ENCODE measurements at regions of chr3 and their contacts with region 1.

Region 1: GRCh38 chr3:120348981-120349818 is at the start of gene LRRC58:
- DNase-seq: peak; percentile 95
- H3K4me3 ChIP-seq: peak within 1 kb of the TSS; percentile 69 to 94 (median 85)
- H3K27ac ChIP-seq: peak within 1 kb of the TSS; percentile 86 to 95 (median 90)
- H3K4me1 ChIP-seq: peaks cover 16 to 47% (median 34%) of the 10 kb centered on the region in 4 donors
- H3K27me3 ChIP-seq: no peaks in the 10 kb centered on the region
- CTCF ChIP-seq: peak; percentile 24 to 41 (median 36)
- EP300 ChIP-seq: no peak
- POLR2A ChIP-seq: peak; percentile 84
- total RNA-seq, gene LRRC58: 30.0 to 36.7 (median 35.2) TPM

Region 2: GRCh38 chr3:119891944-119892721 is 457.1 kb before region 1 on chr3:
- intact Hi-C with region 1: loop called (anchors 5 kb)
- DNase-seq: no peak
- H3K4me3 ChIP-seq: no peak overlapping the region
- H3K27ac ChIP-seq: no peak overlapping the region
- H3K4me1 ChIP-seq: peaks cover 0 to 10% (median 8%) of the 10 kb centered on the region in 4 donors
- H3K27me3 ChIP-seq: no peaks in the 10 kb centered on the region
- CTCF ChIP-seq: peak; percentile 64 to 73 (median 71)
- EP300 ChIP-seq: no peak
- POLR2A ChIP-seq: no peak

Region 3: GRCh38 chr3:120095226-120095978 is 253.8 kb before region 1 on chr3:
- intact Hi-C with region 1: loop called (anchors 10 kb)
- DNase-seq: peak; percentile 97
- H3K4me3 ChIP-seq: peak overlapping the region; percentile 86 to 90 (median 88)
- H3K27ac ChIP-seq: peak overlapping the region; percentile 99 to 100 (median 99)
- H3K4me1 ChIP-seq: peaks cover 9 to 31% (median 26%) of the 10 kb centered on the region in 4 donors
- H3K27me3 ChIP-seq: no peaks in the 10 kb centered on the region
- CTCF ChIP-seq: no peak
- EP300 ChIP-seq: no peak
- POLR2A ChIP-seq: peak; percentile 89

Region 4: DNA sequence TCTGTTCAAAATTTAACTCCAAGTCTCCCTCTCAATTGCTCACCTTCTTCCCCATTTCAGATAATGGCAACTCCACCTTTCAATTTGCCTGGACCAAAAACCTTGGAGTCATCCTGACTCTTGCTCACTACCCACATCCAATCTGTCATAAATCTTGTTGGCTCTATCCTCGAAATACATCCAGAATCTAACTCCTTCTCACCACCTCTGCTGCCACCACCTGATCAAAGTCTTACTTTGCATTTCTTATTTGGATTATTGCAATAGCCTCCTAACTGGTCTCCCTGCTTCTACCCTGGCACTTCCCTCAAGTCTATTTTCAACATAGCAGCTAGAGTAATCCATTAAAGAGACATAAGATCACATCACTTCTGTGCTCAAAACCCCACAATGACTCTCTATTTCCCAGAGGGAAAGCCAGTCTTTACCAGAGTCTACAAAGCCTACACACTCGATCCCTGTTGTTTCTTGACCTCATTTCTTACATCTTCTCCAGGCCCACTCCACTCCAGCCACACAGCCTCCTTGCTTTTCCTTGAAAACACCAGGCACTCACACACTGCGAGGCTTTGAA is 150.8 kb before region 1 on chr3:
- intact Hi-C with region 1: no loop called
- DNase-seq: no peak
- H3K4me3 ChIP-seq: no peak overlapping the region
- H3K27ac ChIP-seq: no peak overlapping the region
- H3K4me1 ChIP-seq: peaks cover 10 to 13% (median 12%) of the 10 kb centered on the region in 4 donors
- H3K27me3 ChIP-seq: no peaks in the 10 kb centered on the region
- CTCF ChIP-seq: peak; percentile 14 to 24 (median 18)
- EP300 ChIP-seq: no peak
- POLR2A ChIP-seq: no peak

Region 5: DNA sequence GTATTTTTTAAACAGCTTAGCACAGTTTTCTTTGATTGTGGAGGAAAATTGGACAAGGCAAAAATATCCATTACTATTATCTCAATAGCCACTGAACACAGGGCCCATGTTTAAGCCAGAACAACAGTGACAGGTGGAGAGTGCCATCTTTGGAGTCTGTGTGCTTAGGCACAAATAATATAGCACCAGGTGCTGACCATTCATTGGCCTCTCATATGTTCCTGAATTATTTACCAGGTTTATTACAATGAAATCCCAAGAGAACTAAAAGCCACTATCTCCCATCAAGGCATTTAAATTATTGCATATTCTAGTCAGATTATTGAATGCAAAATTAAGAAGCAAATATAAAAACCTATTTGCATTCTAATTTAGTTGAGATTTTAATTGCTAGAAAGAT is 103.8 kb before region 1 on chr3:
- intact Hi-C with region 1: loop called (anchors 10 kb)
- DNase-seq: no peak
- H3K4me3 ChIP-seq: no peak overlapping the region
- H3K27ac ChIP-seq: no peak overlapping the region
- H3K4me1 ChIP-seq: no peaks in the 10 kb centered on the region
- H3K27me3 ChIP-seq: no peaks in the 10 kb centered on the region
- CTCF ChIP-seq: no peak
- EP300 ChIP-seq: no peak
- POLR2A ChIP-seq: no peak

Region 6: GRCh38 chr3:120506828-120507774 is 157.9 kb after region 1 on chr3:
- intact Hi-C with region 1: loop called (anchors 10 kb)
- DNase-seq: peak; percentile 91
- H3K4me3 ChIP-seq: peak overlapping the region in 2 of 4 donors; percentile 4 to 21
- H3K27ac ChIP-seq: peak overlapping the region in 3 of 4 donors; percentile 25 to 44 (median 40)
- H3K4me1 ChIP-seq: peaks cover 16 to 27% (median 21%) of the 10 kb centered on the region in 4 donors
- H3K27me3 ChIP-seq: no peaks in the 10 kb centered on the region
- CTCF ChIP-seq: peak; percentile 58 to 71 (median 65)
- EP300 ChIP-seq: no peak
- POLR2A ChIP-seq: no peak

Measured in esophagus muscularis mucosa (tissue), 4 donors.